Activated CD4-positive, alpha-beta memory T cell treated with anti-CD3 and anti-CD28 coated beads, Interleukin-2, amount 10 ng/mL, durations not matched to agents 7 days and 5 days (primary cell): ENCODE measurements at regions of chr19 and their contacts with region 1.

Region 1: DNA sequence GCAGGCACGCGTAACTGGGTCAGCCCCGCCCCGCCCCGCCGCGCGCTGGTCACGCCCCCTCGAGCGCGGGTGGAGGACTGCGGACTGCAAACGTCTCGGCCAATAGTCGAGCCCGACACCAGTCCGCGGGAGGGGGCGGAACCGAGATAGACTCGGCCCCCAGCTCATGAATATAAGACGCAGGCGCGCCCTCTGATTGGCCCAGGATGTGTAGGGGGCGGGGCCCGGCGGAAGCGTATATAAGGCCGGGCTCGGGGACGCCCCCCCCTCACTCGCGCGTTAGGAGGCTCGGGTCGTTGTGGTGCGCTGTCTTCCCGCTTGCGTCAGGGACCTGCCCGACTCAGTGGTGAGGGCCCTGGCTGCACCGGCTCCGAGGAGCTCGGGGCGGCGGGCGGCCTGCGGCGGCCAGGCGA is at the start of gene CIRBP:
- DNase-seq: peak; percentile 100
- H3K4me3 Mint-ChIP-seq: peak within 1 kb of the TSS; percentile 91
- H3K27ac Mint-ChIP-seq: peak within 1 kb of the TSS; percentile 85
- H3K4me1 Mint-ChIP-seq: peaks cover 70% of the 10 kb centered on the region
- H3K27me3 Mint-ChIP-seq: peaks cover 3% of the 10 kb centered on the region
- total RNA-seq, gene CIRBP: 203 to 204 TPM

Region 2: DNA sequence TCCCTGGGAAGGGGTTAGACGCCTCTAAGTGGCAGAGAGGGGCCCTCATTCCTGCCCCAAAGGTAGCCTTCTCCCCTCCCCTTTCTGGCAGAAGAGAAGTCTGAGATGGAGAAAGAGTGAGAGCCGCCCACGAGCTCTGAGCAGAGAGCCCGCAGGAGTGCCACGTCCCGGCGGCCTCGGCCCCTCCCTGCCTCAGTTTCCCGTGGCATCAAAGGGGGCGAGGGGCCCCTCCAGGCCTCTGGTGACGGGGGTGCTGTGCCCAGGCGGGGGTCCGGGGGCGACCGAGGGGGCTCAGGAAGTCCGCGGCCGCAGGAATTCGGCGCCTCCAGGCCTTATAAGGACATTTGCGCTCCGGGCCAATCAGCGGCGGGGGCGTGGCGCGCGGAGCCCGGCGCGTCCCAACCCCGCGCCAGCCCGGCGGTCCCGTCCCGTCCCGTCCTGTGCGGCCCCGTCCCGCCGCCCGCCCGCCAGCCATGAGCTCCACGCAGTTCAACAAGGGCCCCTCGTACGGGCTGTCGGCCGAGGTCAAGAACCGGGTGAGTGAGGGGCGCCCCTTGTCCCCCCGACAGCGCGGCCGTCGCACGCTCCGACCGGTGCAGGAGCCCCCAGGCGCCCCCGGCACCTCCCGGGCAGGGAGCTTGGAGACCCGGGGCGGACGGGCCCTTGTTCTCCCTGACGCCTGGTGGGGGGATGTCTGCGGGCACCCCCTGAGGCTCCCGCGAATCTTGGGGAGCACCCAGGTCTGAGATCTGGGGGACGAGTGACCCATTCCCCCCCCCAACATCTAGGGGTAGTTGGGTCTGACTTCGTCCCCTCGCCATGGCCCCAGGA is 242.7 kb before region 1 on chr19 and contains the start of gene CNN2:
- CTCF ChIA-PET with region 1: interaction called, 3 read pairs
- POLR2A ChIA-PET with region 1: interaction called, 22 read pairs
- DNase-seq: peak; percentile 78
- H3K4me3 Mint-ChIP-seq: peak within 1 kb of the TSS; percentile 97
- H3K27ac Mint-ChIP-seq: peak within 1 kb of the TSS; percentile 95
- H3K4me1 Mint-ChIP-seq: peaks cover 33% of the 10 kb centered on the region
- H3K27me3 Mint-ChIP-seq: no peaks in the 10 kb centered on the region
- total RNA-seq, gene CNN2: 513 to 519 TPM

Region 3: DNA sequence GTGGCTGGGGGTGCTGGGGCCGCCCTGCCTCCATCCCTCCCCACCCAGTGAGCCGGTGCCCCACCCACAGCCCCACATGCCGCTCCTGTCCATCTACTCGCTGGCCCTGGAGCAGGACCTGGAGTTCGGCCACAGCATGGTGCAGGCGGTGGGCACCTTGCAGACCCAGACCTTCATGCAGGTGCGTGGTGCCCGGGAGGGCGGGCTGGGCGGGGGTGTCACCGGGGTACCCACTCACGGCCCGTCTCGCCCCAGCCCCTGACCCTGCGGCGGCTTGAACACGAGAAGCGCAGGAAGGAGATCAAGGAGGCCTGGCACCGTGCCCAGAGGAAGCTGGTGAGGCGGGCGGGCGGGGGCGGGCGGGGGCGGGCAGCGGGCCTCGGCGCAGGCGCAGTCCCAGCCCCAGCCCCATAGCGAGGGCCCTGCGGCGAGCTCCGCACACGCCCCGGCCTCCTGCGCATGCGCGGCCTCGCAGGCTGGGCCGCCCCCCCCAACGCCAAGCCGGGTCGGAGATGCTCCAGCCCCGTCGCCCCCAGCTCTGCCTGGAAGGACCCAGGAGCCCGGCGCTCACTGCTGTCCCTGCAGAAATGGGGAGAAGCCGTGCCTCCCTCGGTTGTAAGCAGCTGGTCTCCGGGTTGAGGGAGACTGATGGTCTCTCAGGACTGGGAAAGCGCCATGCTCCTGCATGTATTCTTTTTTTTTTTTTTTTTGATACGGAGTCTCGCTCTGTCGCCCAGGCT is 194.4 kb before region 1 on chr19:
- CTCF ChIA-PET with region 1: interaction called, 6 read pairs
- POLR2A ChIA-PET with region 1: interaction called, 13 read pairs
- DNase-seq: peak; percentile 91
- H3K4me3 Mint-ChIP-seq: peak overlapping the region; percentile 59
- H3K27ac Mint-ChIP-seq: peak overlapping the region; percentile 93
- H3K4me1 Mint-ChIP-seq: peaks cover 64% of the 10 kb centered on the region
- H3K27me3 Mint-ChIP-seq: no peaks in the 10 kb centered on the region

Region 4: GRCh38 chr19:1131738-1132551 is 137.1 kb before region 1 on chr19:
- CTCF ChIA-PET with region 1: interaction called, 3 read pairs
- POLR2A ChIA-PET with region 1: interaction called, 17 read pairs
- DNase-seq: peak; percentile 92
- H3K4me3 Mint-ChIP-seq: peak overlapping the region; percentile 86
- H3K27ac Mint-ChIP-seq: peak overlapping the region; percentile 92
- H3K4me1 Mint-ChIP-seq: peaks cover 44% of the 10 kb centered on the region
- H3K27me3 Mint-ChIP-seq: no peaks in the 10 kb centered on the region

Region 5: DNA sequence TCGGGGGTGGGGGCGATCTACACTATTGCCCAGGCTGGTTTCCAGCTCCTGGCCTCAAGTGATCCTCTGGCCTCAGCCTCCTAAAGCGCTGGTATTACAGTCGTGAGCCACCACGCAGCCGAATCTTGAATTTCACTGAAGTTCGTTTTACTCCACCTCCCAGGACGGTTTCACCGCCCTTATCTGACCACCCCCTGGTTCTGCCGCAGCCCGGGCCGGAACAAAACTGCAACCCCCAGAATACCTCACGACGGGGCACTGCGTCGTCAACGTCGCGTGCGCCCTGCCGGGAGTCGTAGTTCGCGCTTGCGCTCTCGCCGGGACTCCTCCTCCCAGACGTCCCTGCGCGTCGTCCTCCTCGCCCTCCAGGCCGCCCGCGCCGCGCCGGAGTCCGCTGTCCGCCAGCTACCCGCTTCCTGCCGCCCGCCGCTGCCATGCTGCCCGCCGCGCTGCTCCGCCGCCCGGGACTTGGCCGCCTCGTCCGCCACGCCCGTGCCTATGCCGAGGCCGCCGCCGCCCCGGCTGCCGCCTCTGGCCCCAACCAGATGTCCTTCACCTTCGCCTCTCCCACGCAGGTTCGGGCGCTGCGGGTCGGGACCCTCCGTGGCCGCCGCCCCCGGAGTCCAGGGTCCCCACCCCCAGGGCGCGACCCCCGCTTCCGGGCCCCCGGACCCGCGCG is 27.5 kb before region 1 on chr19 and contains the start of gene ATP5F1D:
- CTCF ChIA-PET with region 1: interaction called, 412 read pairs
- POLR2A ChIA-PET with region 1: interaction called, 266 read pairs
- DNase-seq: peak; percentile 93
- H3K4me3 Mint-ChIP-seq: peak within 1 kb of the TSS; percentile 88
- H3K27ac Mint-ChIP-seq: peak within 1 kb of the TSS; percentile 84
- H3K4me1 Mint-ChIP-seq: peaks cover 46% of the 10 kb centered on the region
- H3K27me3 Mint-ChIP-seq: peaks cover 15% of the 10 kb centered on the region
- total RNA-seq, gene ATP5F1D: 171 to 173 TPM

Region 6: DNA sequence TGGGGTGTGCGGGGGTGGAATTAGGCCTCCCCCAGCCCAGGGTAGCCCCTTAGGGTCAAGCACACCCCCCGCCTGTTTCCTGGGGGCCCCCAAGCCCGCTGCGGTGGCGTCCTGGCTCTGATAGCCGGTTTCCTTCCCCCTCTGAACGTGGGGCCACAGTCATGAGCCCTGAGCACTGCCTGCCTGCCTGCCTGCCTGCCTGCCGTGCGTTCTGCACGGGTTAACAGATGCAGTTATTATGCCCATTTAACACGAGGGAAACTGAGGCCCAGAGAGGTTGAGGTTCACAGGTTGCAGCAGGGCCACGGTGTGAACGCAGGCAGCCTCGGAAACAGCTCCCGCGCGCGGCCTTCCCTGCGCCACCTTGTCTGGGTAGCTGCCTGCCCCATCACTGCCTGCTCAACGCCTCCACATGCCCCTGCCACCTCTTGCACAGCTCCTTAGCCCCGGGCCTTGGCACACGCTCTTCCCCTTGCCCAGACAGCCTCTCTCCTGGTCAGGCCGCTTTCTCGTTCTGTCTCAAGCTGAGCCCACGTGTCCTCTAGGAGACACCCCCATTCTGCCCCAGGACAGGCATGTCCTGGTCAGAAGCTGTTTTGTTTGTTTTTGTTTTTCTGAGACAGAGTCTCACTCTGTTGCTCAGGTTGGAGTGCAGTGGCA is 133.5 kb after region 1 on chr19:
- CTCF ChIA-PET with region 1: interaction called, 3 read pairs
- POLR2A ChIA-PET with region 1: interaction called, 10 read pairs
- DNase-seq: no peak
- H3K4me3 Mint-ChIP-seq: peak overlapping the region; percentile 46
- H3K27ac Mint-ChIP-seq: no peak overlapping the region
- H3K4me1 Mint-ChIP-seq: peaks cover 19% of the 10 kb centered on the region
- H3K27me3 Mint-ChIP-seq: peaks cover 8% of the 10 kb centered on the region